Activated naive CD4-positive, alpha-beta T cell treated with anti-CD3 and anti-CD28 coated beads for 36 hours (primary cell): ENCODE measurements at regions of chr14 and their contacts with region 1.

Region 1: DNA sequence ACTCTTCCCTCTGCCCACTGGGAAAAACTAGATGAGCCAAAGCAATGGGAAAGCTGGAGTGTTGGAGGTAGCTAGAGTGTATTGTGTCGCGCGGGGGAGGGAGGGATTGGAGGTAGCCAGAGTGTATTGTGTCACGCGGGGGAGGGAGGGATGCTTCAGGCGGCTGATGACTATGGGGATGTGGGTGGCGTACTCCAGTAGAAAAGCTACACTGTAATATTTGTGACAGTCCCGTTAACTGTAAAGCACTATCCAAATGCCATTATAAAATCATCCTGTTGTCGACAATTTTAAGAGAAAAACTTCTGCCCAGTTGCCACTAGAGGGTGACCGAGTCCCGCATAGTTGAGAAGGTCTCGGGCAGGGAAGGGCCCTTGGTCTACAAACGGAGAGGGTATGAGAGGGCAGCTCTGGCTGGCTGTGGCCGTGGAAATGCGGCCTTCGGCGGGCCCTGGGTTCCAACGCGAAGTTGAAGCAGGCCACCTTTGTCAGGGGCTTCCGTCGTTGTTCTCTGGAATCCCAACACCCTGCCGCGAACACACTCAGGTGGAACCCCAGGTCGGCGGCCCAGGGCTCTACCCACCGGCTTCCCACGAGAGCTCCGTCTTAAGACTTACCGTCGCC is 15.1 kb upstream of the PLEK2 start:
- DNase-seq: peak; percentile 84
- H3K4me3 Mint-ChIP-seq: no peak overlapping the region
- H3K27ac Mint-ChIP-seq: no peak overlapping the region
- H3K4me1 Mint-ChIP-seq: no peaks in the 10 kb centered on the region
- H3K27me3 Mint-ChIP-seq: peaks cover 11% of the 10 kb centered on the region

Region 2: DNA sequence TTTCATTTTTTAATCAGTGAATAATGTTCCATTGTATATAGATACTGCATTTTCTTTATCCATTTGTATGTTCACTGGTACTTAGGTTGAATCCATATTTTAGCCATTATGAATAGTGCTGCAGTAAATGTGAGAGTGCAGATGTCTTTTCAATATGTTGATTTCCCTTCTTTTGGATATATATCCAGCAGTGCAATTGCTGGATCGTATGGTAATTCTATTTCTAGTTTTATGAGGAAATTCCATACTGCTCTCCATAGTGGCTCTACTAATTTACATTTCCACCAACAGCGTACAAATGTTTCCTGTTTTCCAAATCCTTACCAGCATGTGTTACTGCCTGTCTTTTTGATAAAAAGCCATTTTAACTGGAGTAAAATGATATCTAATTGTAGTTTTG is 526.4 kb before region 1 on chr14:
- CTCF ChIA-PET with region 1: no interaction called
- intact Hi-C with region 1: no loop called
- DNase-seq: no peak
- H3K4me3 Mint-ChIP-seq: no peak overlapping the region
- H3K27ac Mint-ChIP-seq: no peak overlapping the region
- H3K4me1 Mint-ChIP-seq: no peaks in the 10 kb centered on the region
- H3K27me3 Mint-ChIP-seq: no peaks in the 10 kb centered on the region

Region 3: GRCh38 chr14:67228325-67228984 is 198.6 kb before region 1 on chr14:
- CTCF ChIA-PET with region 1: no interaction called
- intact Hi-C with region 1: no loop called
- DNase-seq: no peak
- H3K4me3 Mint-ChIP-seq: no peak overlapping the region
- H3K27ac Mint-ChIP-seq: no peak overlapping the region
- H3K4me1 Mint-ChIP-seq: no peaks in the 10 kb centered on the region
- H3K27me3 Mint-ChIP-seq: peaks cover 7% of the 10 kb centered on the region

Region 4: DNA sequence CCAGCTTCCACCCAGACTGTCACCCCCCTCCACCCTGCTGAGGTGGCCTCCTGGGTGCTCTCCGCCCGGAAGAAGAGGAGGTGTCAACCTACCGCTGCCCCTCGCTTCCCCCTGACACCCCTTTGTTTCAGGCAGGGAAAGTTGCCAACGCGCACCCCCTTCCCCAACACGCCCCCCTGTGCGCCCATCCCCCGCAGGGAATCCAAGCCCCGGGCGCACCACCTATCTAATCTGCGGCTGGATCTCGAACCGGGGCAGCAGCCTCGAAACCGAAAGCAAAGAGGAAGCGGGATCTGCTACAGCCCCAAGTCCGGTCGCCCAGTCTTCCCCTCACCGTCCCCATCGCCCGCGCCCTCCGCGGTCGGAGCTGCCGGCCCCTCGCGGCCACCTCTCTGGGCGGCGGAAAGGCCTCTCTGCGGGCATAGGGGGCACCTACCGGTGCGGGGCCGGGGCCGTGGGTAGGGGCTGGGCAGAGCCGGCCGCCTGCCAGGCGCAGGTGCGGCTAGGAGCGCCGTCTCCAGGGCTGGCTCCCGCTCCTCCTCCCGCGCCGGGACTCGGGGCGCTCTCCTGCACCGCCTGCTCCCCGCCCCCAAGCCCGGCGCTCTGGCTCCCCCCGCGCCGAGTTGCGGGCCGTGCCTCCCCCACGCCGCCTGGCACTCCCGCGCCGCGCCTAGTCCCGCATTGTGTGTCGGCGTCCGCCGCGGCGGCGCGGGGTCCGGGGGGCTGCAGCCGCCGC is 87.7 kb after region 1 on chr14:
- CTCF ChIA-PET with region 1: interaction called, 25 read pairs
- intact Hi-C with region 1: no loop called
- DNase-seq: peak; percentile 23
- H3K4me3 Mint-ChIP-seq: peak overlapping the region; percentile 75
- H3K27ac Mint-ChIP-seq: no peak overlapping the region
- H3K4me1 Mint-ChIP-seq: peaks cover 5% of the 10 kb centered on the region
- H3K27me3 Mint-ChIP-seq: no peaks in the 10 kb centered on the region

Region 5: GRCh38 chr14:67532998-67533753 is 106.1 kb after region 1 on chr14 and contains the start of gene PLEKHH1:
- CTCF ChIA-PET with region 1: interaction called, 23 read pairs
- intact Hi-C with region 1: no loop called
- DNase-seq: peak; percentile 76
- H3K4me3 Mint-ChIP-seq: peak within 1 kb of the TSS; percentile 65
- H3K27ac Mint-ChIP-seq: no peak within 1 kb of the TSS
- H3K4me1 Mint-ChIP-seq: peaks cover 3% of the 10 kb centered on the region
- H3K27me3 Mint-ChIP-seq: peaks cover 16% of the 10 kb centered on the region
- total RNA-seq, gene PLEKHH1: 2.2 to 2.5 TPM

Region 6: DNA sequence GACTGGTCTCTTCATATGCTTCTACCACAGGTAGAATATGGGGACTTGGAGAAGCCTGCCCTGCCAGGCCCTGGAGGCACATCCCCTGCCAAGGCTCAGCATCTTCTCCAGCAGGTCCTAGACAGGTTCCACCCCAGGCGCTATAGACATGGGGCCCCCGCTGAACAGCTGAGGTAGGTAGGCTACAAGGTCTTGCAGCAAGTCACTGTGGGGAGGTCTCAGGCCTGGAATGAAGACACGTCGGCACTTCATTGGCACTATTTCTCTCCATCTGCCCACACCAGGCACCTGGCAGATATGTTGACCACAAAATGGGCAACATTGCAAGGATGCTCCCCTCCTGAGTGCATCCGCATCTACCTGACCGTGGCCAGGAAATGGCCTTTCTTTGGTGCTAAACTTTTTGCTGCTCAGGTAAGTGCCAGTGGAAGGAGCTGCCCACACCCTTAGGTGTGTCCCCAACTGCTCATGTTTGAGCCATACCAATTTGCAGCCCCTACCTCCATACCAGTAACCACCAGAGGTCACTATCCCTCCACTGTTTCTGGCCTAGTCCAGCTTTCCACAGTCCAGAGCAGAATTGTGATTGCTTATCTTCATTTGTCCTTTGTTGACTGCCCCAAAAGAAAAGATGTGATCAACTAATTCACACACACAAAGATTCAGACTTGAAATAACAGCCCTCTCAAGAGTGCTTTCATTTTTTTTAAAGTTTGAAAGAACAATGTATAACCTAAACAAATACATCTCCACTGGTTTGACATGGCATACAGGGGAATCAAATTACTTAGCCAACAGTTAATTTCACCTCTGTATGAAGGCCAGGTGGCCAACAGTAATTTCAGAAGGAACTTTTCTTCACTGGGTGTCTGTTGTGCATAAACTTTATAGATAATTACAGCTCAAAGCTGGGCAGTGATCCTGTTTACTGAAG is 156.9 kb after region 1 on chr14:
- CTCF ChIA-PET with region 1: interaction called, 11 read pairs
- intact Hi-C with region 1: no loop called
- DNase-seq: peak; percentile 61
- H3K4me3 Mint-ChIP-seq: no peak overlapping the region
- H3K27ac Mint-ChIP-seq: no peak overlapping the region
- H3K4me1 Mint-ChIP-seq: no peaks in the 10 kb centered on the region
- H3K27me3 Mint-ChIP-seq: no peaks in the 10 kb centered on the region

Region 7: GRCh38 chr14:67704484-67705089 is 277.5 kb after region 1 on chr14:
- CTCF ChIA-PET with region 1: interaction called, 46 read pairs
- intact Hi-C with region 1: loop called (anchors 1 kb)
- DNase-seq: peak; percentile 59
- H3K4me3 Mint-ChIP-seq: no peak overlapping the region
- H3K27ac Mint-ChIP-seq: no peak overlapping the region
- H3K4me1 Mint-ChIP-seq: no peaks in the 10 kb centered on the region
- H3K27me3 Mint-ChIP-seq: no peaks in the 10 kb centered on the region